ENCODE measurements at regions of chr12 and their contacts with region 1.

Region 1: DNA sequence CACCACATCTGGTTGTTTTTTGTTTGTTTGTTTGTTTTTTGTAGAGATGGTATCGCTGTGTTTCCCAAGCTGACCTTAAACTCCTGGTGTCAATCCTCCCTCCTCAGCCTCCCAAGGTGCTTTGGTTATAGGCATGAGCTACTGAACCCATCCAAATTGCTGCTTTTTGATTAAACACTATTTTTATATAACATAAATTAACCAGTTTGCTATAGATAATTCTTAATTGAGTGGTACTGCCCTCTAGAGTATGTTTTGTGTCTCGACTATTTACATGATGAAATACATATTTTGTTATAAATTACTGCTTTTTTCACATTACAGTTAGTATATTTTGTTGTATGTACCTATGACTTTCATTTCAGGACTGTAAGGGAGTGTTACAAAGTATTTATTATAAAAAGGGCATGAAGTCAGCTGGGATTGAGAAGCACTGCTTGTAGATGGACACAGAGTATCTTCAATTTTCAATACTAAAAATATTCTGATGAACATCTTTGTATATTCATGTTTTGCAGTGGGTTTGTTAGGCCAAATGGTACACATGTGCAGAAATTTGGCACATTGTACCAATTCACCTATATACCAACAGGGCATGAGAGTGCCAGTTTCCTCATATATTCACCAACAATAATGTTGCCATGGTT is 14.9 kb upstream of the SCAF11 start:
- DNase-seq: no peak
- ATAC-seq: no peak
- H3K4me3 ChIP-seq: no peak overlapping the region
- H3K27ac ChIP-seq: no peak overlapping the region
- H3K4me1 ChIP-seq: no peaks in the 10 kb centered on the region
- H3K27me3 ChIP-seq: no peaks in the 10 kb centered on the region
- CTCF ChIP-seq: peak in 7 of 9 donors; percentile 38 to 60 (median 50)

Region 2: GRCh38 chr12:45557016-45557415 is 448.3 kb before region 1 on chr12:
- intact Hi-C with region 1: loop called in 1 of 10 experiments (anchors 10 kb)
- DNase-seq: no peak
- ATAC-seq: no peak
- H3K4me3 ChIP-seq: no peak overlapping the region
- H3K27ac ChIP-seq: no peak overlapping the region
- H3K4me1 ChIP-seq: peaks cover 0 to 5% (median 0%) of the 10 kb centered on the region in 9 donors
- H3K27me3 ChIP-seq: no peaks in the 10 kb centered on the region
- CTCF ChIP-seq: no peak

Region 3: GRCh38 chr12:45762185-45763110 is 242.8 kb before region 1 on chr12:
- intact Hi-C with region 1: loop called in 1 of 10 experiments (anchors 5 kb)
- DNase-seq: no peak
- ATAC-seq: peak in 5 of 8 donors; percentile 25 to 68 (median 55)
- H3K4me3 ChIP-seq: no peak overlapping the region
- H3K27ac ChIP-seq: no peak overlapping the region
- H3K4me1 ChIP-seq: peaks cover 5 to 32% (median 16%) of the 10 kb centered on the region in 9 donors
- H3K27me3 ChIP-seq: no peaks in the 10 kb centered on the region
- CTCF ChIP-seq: peak; percentile 7 to 75 (median 63)

Region 4: DNA sequence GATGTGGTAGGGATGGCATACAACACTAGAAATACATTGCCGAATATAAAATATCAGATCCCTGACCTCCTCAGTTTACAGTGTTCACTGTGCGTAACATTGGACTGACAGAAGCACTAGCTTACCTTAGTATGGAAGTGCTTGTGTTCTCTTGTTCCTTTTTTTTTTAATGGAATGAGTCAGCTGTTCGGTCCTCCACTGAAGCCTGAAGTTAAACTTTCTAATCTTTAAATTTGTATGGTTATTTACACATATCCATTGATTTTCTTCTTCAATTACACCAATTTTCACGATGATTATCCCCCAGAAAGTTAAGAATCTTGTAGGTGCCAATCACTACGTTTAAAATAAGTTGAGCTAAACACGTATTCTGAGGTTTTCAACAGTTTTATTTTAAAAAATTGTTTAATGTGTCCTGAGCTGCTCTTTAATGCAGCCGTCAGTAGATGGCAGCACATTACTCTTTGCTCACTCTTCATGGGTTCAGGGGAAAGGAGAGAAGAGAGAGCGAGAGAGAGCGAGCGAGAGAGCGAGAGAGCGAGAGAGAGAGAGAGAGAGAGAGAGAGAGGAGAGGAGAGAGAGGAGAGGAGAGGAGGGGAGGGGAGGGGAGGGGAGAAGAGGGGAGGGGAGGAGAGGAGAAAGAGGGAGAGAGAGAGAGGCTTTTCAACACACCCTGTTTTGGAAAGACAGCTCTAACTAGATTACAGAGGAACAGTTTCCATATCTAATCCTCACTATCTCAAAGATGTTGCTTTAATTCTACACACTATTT is 119.8 kb after region 1 on chr12:
- intact Hi-C with region 1: no loop called
- DNase-seq: peak in 1 of 2 donors; percentile 65
- ATAC-seq: peak; percentile 85 to 94 (median 88)
- H3K4me3 ChIP-seq: peak overlapping the region in 3 of 10 donors; percentile 13 to 19 (median 17)
- H3K27ac ChIP-seq: no peak overlapping the region
- H3K4me1 ChIP-seq: peaks cover 0 to 14% (median 5%) of the 10 kb centered on the region in 9 donors
- H3K27me3 ChIP-seq: no peaks in the 10 kb centered on the region
- CTCF ChIP-seq: peak; percentile 37 to 81 (median 58)